Activated T-helper 1 cell treated with anti-CD3 and anti-CD28 coated beads, Interleukin-12 subunit alpha, Interleukin-12 subunit beta, Interleukin-2, Interleukin-4 antibody, amounts not matched to agents 30 ng/mL and 10 ng/mL and 1 ng/mL, durations not matched to agents 14 hours and 24 hours and 36 hours (primary cell): ENCODE measurements at regions of chrX and their contacts with region 1.

Region 1: DNA sequence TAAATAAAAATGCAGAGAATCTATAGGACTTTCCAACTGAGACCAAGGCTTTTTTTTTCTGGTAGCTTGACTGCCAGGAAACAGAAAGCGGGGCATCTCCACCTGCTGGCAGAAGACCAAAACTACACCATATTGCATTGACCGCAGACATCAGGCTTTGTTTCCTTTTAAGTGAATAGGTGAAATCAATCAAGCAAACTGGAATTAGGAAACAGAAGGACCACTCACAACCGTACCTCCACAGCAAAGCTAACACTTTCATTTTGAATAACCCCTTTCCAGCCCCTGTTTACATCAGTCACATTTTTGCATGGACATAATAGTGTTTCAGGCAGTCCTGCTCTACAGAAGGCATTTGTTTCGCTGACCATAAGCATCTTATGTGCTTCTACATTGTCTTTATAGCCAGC is 218.2 kb downstream of the IDS start:
- DNase-seq: peak; percentile 11
- H3K4me3 Mint-ChIP-seq: no peak overlapping the region
- H3K27ac Mint-ChIP-seq: no peak overlapping the region
- H3K4me1 Mint-ChIP-seq: peaks cover 17% of the 10 kb centered on the region
- H3K27me3 Mint-ChIP-seq: no peaks in the 10 kb centered on the region

Region 2: GRCh38 chrX:148049441-148049840 is 1237.5 kb before region 1 on chrX:
- intact Hi-C with region 1: loop called (anchors 1 kb)
- DNase-seq: no peak
- H3K4me3 Mint-ChIP-seq: no peak overlapping the region
- H3K27ac Mint-ChIP-seq: no peak overlapping the region
- H3K4me1 Mint-ChIP-seq: no peaks in the 10 kb centered on the region
- H3K27me3 Mint-ChIP-seq: no peaks in the 10 kb centered on the region

Region 3: GRCh38 chrX:148133105-148133725 is 1153.7 kb before region 1 on chrX:
- intact Hi-C with region 1: loop called (anchors 5 kb)
- DNase-seq: no peak
- H3K4me3 Mint-ChIP-seq: no peak overlapping the region
- H3K27ac Mint-ChIP-seq: no peak overlapping the region
- H3K4me1 Mint-ChIP-seq: no peaks in the 10 kb centered on the region
- H3K27me3 Mint-ChIP-seq: no peaks in the 10 kb centered on the region

Region 4: DNA sequence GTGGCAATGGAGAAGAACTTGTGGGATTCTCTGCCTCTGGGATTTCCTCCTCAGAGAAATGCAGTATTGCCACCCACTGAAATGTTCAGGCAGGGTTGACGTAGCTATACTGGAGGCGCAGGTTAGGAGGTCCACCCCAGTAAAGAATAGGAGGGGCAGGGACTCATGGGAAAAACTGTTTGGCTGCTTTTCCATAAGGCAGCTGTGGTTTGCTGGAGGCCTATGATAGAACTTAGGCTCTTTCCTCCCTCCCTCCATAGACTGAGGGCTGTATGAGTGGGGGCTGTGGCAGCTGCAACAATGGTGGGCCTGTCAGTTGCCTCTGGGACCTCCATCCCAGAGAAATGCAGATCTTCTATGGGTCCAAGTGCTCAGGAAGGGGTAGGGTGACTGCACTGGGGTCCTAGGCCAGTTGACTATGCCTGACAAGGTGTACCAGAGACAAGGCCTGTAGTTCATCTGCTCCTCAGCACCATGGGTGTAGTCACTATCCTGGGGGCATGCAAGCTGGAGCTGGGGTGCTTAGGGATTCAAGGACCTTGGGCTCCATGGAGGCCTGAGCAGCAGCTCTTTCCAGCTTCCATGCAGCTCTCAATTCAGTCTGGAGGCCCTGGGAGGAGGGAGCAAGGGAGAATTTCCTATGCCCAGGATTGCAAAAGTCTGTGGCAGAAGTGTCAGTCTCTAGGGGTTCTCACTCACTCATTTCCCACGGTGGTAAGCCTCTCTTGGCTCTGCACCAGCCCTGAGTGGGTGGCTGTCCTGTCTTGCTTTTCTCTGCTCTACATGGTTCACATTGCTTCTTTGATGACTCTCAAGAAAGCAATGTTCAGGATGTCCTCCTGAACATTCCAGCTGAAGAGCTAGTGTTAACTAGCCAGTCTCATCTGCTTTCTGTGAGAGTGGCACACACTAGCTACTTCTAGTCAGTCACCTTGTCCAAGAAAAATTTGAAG is 134.9 kb before region 1 on chrX:
- intact Hi-C with region 1: loop called (anchors 2 kb)
- DNase-seq: no peak
- H3K4me3 Mint-ChIP-seq: no peak overlapping the region
- H3K27ac Mint-ChIP-seq: no peak overlapping the region
- H3K4me1 Mint-ChIP-seq: no peaks in the 10 kb centered on the region
- H3K27me3 Mint-ChIP-seq: no peaks in the 10 kb centered on the region

Region 5: GRCh38 chrX:149198980-149199732 is 87.8 kb before region 1 on chrX:
- intact Hi-C with region 1: loop called (anchors 2 kb)
- DNase-seq: no peak
- H3K4me3 Mint-ChIP-seq: no peak overlapping the region
- H3K27ac Mint-ChIP-seq: peak overlapping the region; percentile 16
- H3K4me1 Mint-ChIP-seq: peaks cover 4% of the 10 kb centered on the region
- H3K27me3 Mint-ChIP-seq: peaks cover 1% of the 10 kb centered on the region

Region 6: DNA sequence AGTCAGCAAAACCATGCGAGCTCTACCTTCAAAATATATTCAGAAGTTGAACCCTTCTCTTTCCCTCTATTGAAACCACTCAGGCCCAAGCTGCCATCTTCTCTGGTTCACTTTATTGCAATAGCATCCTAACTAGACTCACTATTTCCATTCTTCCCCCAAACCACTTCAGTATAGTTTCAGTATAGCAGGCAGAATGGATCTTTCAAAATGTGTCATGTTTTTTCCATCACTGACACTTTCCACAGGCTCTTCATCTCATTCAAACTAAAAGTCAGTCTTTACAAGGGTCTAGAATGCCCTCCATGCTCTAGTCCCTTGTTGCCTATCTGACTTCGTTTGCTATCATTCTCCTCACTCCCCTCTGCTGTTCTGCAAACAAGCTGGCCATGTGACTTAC is 56.3 kb before region 1 on chrX:
- intact Hi-C with region 1: loop called (anchors 1 kb)
- DNase-seq: no peak
- H3K4me3 Mint-ChIP-seq: no peak overlapping the region
- H3K27ac Mint-ChIP-seq: peak overlapping the region; percentile 87
- H3K4me1 Mint-ChIP-seq: peaks cover 9% of the 10 kb centered on the region
- H3K27me3 Mint-ChIP-seq: peaks cover 1% of the 10 kb centered on the region

Region 7: GRCh38 chrX:149267878-149268813 is 18.8 kb before region 1 on chrX:
- intact Hi-C with region 1: loop called (anchors 1 kb)
- DNase-seq: no peak
- H3K4me3 Mint-ChIP-seq: no peak overlapping the region
- H3K27ac Mint-ChIP-seq: peak overlapping the region; percentile 3
- H3K4me1 Mint-ChIP-seq: peaks cover 16% of the 10 kb centered on the region
- H3K27me3 Mint-ChIP-seq: peaks cover 6% of the 10 kb centered on the region

Region 8: DNA sequence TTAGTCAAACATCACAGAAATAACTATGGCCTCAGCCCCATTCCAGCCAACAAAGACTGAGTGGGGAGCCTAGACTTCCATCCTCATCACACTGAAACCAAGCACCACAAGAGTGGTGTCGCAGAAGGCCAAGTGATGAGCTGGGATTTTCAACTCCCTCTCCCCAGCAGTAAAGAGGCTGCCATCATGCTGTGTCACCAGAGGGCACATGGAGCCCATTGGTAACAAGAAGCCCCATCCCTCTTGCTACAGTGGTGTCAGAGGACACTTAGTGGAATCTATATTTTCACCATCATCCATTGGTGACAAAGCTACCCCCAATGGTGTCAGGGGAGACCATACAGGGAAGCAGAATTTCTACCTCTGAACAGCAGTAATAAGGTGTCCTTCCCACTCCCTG is 19.5 kb after region 1 on chrX:
- intact Hi-C with region 1: no loop called
- DNase-seq: no peak
- H3K4me3 Mint-ChIP-seq: no peak overlapping the region
- H3K27ac Mint-ChIP-seq: no peak overlapping the region
- H3K4me1 Mint-ChIP-seq: no peaks in the 10 kb centered on the region
- H3K27me3 Mint-ChIP-seq: peaks cover 2% of the 10 kb centered on the region

Region 9: DNA sequence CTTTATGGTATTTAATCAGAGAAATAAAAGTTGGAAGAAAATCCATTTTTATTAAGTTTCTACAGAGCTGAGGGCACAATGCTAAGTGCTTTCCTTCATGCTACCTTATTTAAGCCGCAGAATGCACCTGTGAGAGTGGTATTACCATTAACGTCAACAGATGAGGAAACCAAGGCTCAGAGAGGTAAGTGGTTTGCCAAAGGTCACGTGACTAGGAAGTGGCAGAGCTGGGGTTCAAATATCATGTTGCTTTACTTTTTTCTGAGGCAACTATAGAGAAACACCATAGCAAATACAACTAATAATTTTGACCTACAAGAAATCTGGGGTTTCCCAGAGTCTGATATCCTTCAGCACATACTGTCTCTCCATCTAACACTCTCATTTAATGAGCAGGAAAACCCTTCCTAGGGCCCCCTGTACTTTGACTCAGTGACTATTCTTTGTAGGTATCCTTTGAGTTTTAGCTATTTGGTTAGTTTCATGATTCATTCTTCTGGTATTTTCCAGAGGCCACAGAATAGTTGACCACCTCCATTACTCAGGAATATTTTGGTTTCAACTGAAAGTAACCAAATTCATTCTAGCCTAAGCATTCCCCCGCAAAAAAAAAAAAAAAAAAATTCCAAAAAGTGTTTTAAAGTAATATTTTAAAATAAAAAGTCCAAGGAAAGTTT is 78.0 kb after region 1 on chrX:
- intact Hi-C with region 1: no loop called
- DNase-seq: no peak
- H3K4me3 Mint-ChIP-seq: no peak overlapping the region
- H3K27ac Mint-ChIP-seq: no peak overlapping the region
- H3K4me1 Mint-ChIP-seq: no peaks in the 10 kb centered on the region
- H3K27me3 Mint-ChIP-seq: peaks cover 2% of the 10 kb centered on the region

Region 10: DNA sequence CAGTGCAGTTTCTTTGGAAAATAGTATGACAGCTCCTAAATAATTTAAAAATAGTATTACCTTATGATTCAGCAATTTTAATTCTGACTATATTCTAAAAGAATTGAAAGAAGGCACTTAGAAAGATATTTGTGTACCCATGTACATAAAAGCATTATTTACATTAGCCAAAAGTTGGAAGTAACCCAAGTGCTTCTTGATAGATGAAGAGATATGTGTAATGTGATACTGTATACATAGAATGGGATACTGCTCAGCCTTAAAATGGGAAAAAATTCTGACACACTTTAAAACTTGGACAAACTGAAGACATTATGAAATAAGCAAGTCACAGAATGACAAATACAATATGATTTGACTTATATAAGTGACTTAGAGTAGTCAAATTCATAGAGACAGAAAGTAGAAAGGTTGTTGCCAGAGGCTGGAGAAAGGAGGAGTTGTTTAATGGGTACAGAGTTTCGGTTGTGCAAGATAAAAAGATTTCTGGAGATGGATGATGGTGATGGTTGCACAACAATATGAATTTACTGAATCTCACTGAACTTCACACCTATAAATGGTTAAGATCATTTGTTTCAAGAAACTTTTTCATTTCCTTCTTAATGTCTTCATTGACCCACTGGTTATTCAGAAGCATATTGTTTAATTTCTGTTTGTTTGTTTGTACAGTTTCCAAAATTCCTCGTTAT is 106.1 kb after region 1 on chrX:
- intact Hi-C with region 1: no loop called
- DNase-seq: no peak
- H3K4me3 Mint-ChIP-seq: no peak overlapping the region
- H3K27ac Mint-ChIP-seq: no peak overlapping the region
- H3K4me1 Mint-ChIP-seq: no peaks in the 10 kb centered on the region
- H3K27me3 Mint-ChIP-seq: no peaks in the 10 kb centered on the region